ENCODE measurements at regions of chr5 and their contacts with region 1.

Region 1: GRCh38 chr5:161544350-161544765 is 2.2 kb downstream of the GABRB2 start:
- DNase-seq: peak; percentile 72
- H3K4me3 Mint-ChIP-seq: no peak overlapping the region
- H3K27ac Mint-ChIP-seq: no peak overlapping the region
- H3K4me1 Mint-ChIP-seq: peaks cover 11% of the 10 kb centered on the region
- H3K27me3 Mint-ChIP-seq: peaks cover 93% of the 10 kb centered on the region
- CTCF ChIP-seq: peak; percentile 97

Region 2: GRCh38 chr5:161372682-161373344 is 171.5 kb before region 1 on chr5:
- CTCF ChIA-PET with region 1: no interaction called
- POLR2A ChIA-PET with region 1: no interaction called
- intact Hi-C with region 1: no loop called
- DNase-seq: no peak
- H3K4me3 Mint-ChIP-seq: no peak overlapping the region
- H3K27ac Mint-ChIP-seq: no peak overlapping the region
- H3K4me1 Mint-ChIP-seq: no peaks in the 10 kb centered on the region
- H3K27me3 Mint-ChIP-seq: peaks cover 87% of the 10 kb centered on the region
- CTCF ChIP-seq: no peak

Region 3: DNA sequence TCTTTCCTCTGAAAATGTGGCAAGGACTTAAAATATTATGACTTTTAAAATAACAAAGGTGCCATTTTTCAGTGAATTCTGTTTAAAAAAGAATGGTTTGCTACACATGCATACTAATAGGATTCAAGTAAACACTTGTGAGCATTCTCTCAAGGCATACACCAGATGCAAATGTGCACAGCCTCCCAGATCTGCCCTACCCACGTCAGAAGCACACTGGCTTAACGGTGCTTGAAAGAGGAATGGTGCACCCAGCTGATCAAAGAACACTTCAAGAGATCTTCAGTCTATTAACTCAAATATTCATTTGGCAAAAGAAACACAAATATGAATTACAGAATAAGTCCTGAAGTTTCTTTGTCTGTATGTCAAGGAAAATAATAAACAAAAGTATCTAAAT is 13.7 kb before region 1 on chr5:
- CTCF ChIA-PET with region 1: interaction called, 17 read pairs
- POLR2A ChIA-PET with region 1: no interaction called
- intact Hi-C with region 1: no loop called
- DNase-seq: no peak
- H3K4me3 Mint-ChIP-seq: no peak overlapping the region
- H3K27ac Mint-ChIP-seq: no peak overlapping the region
- H3K4me1 Mint-ChIP-seq: no peaks in the 10 kb centered on the region
- H3K27me3 Mint-ChIP-seq: peaks cover 81% of the 10 kb centered on the region
- CTCF ChIP-seq: no peak

Region 4: GRCh38 chr5:161562446-161562845 is 18.1 kb after region 1 on chr5:
- CTCF ChIA-PET with region 1: interaction called, 15 read pairs
- POLR2A ChIA-PET with region 1: no interaction called
- intact Hi-C with region 1: no loop called
- DNase-seq: no peak
- H3K4me3 Mint-ChIP-seq: no peak overlapping the region
- H3K27ac Mint-ChIP-seq: no peak overlapping the region
- H3K4me1 Mint-ChIP-seq: no peaks in the 10 kb centered on the region
- H3K27me3 Mint-ChIP-seq: peaks cover 69% of the 10 kb centered on the region
- CTCF ChIP-seq: no peak

Region 5: GRCh38 chr5:161572914-161573313 is 28.6 kb after region 1 on chr5:
- CTCF ChIA-PET with region 1: interaction called, 13 read pairs
- POLR2A ChIA-PET with region 1: no interaction called
- intact Hi-C with region 1: no loop called
- DNase-seq: no peak
- H3K4me3 Mint-ChIP-seq: no peak overlapping the region
- H3K27ac Mint-ChIP-seq: no peak overlapping the region
- H3K4me1 Mint-ChIP-seq: no peaks in the 10 kb centered on the region
- H3K27me3 Mint-ChIP-seq: peaks cover 27% of the 10 kb centered on the region
- CTCF ChIP-seq: no peak

Region 6: GRCh38 chr5:161660806-161661205 is 116.4 kb after region 1 on chr5:
- CTCF ChIA-PET with region 1: no interaction called
- POLR2A ChIA-PET with region 1: no interaction called
- intact Hi-C with region 1: no loop called
- DNase-seq: no peak
- H3K4me3 Mint-ChIP-seq: no peak overlapping the region
- H3K27ac Mint-ChIP-seq: no peak overlapping the region
- H3K4me1 Mint-ChIP-seq: no peaks in the 10 kb centered on the region
- H3K27me3 Mint-ChIP-seq: peaks cover 22% of the 10 kb centered on the region
- CTCF ChIP-seq: no peak

Region 7: DNA sequence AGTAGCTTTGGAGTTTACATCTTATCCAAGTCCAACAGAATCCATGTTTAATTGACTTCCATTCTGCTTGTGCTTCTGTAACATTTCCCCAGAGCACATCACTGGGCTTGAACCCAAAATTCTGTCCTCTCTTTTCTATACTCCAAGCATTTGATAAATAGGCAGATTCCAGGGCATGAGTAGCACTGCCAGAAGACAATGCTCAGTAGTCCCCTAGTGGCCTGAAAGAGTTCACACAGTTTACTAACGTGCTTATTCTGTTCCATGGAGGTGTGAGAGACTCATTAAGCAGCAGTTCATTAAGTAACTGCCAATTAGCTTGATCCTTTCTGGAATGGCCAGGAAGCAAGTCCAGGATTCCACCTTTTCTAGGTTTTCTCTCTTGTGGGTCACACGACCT is 131.7 kb after region 1 on chr5:
- CTCF ChIA-PET with region 1: interaction called, 10 read pairs
- POLR2A ChIA-PET with region 1: interaction called, 3 read pairs
- intact Hi-C with region 1: loop called (anchors 1 kb)
- DNase-seq: peak; percentile 54
- H3K4me3 Mint-ChIP-seq: no peak overlapping the region
- H3K27ac Mint-ChIP-seq: no peak overlapping the region
- H3K4me1 Mint-ChIP-seq: no peaks in the 10 kb centered on the region
- H3K27me3 Mint-ChIP-seq: peaks cover 29% of the 10 kb centered on the region
- CTCF ChIP-seq: peak; percentile 73

Region 8: GRCh38 chr5:161851691-161852299 is 307.4 kb after region 1 on chr5:
- CTCF ChIA-PET with region 1: interaction called, 5 read pairs
- POLR2A ChIA-PET with region 1: no interaction called
- intact Hi-C with region 1: loop called (anchors 5 kb)
- DNase-seq: peak; percentile 30
- H3K4me3 Mint-ChIP-seq: no peak overlapping the region
- H3K27ac Mint-ChIP-seq: no peak overlapping the region
- H3K4me1 Mint-ChIP-seq: no peaks in the 10 kb centered on the region
- H3K27me3 Mint-ChIP-seq: peaks cover 79% of the 10 kb centered on the region
- CTCF ChIP-seq: peak; percentile 45

Region 9: DNA sequence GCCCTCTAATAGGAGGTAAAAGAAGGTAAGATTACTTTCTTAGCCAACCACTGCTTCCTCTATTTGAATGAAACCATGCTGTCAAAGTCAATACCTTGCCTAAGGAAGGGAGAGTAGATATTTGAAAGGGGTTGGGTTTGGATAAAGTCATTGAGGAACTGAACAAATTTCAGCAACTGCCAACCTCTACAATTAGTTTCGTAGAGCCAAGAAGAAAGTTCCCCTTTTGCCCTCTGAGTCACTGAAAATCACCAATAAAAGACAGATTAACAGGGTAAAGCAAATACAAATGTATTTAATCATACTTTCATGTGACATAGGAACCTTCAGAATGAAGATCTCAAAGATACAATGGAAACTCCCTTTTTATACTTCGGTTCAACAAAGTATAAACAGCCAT is 1138.9 kb after region 1 on chr5:
- CTCF ChIA-PET with region 1: no interaction called
- POLR2A ChIA-PET with region 1: no interaction called
- intact Hi-C with region 1: loop called (anchors 10 kb)
- DNase-seq: peak; percentile 16
- H3K4me3 Mint-ChIP-seq: no peak overlapping the region
- H3K27ac Mint-ChIP-seq: no peak overlapping the region
- H3K4me1 Mint-ChIP-seq: peaks cover 14% of the 10 kb centered on the region
- H3K27me3 Mint-ChIP-seq: no peaks in the 10 kb centered on the region
- CTCF ChIP-seq: no peak